Tibial artery (tissue), 4 donors: ENCODE measurements at regions of chr3 and their contacts with region 1.

Region 1: GRCh38 chr3:36937492-36937891 is 7.4 kb downstream of the TRANK1 start:
- DNase-seq: no peak
- H3K4me3 ChIP-seq: no peak overlapping the region
- H3K27ac ChIP-seq: no peak overlapping the region
- H3K4me1 ChIP-seq: peaks cover 0 to 23% (median 11%) of the 10 kb centered on the region in 4 donors
- H3K27me3 ChIP-seq: no peaks in the 10 kb centered on the region
- CTCF ChIP-seq: no peak

Region 2: GRCh38 chr3:36525115-36525801 is 412.2 kb before region 1 on chr3:
- intact Hi-C with region 1: loop called (anchors 10 kb)
- DNase-seq: no peak
- H3K4me3 ChIP-seq: no peak overlapping the region
- H3K27ac ChIP-seq: no peak overlapping the region
- H3K4me1 ChIP-seq: peaks cover 0 to 8% (median 0%) of the 10 kb centered on the region in 4 donors
- H3K27me3 ChIP-seq: no peaks in the 10 kb centered on the region
- CTCF ChIP-seq: no peak